Dorsolateral prefrontal cortex (tissue), 120 donors: ENCODE measurements at regions of chr19 and their contacts with region 1.

Region 1: GRCh38 chr19:57279418-57280066 is 743 bp upstream of the ZNF460 start:
- DNase-seq: peak; percentile 68 to 94 (median 90)
- H3K4me3 ChIP-seq: peak overlapping the region; percentile 62 to 100 (median 96)
- H3K27ac ChIP-seq: peak overlapping the region; percentile 87 to 100 (median 98)
- H3K27me3 ChIP-seq: no peaks in the 10 kb centered on the region
- CTCF ChIP-seq: peak in 49 of 56 donors; percentile 17 to 67 (median 46)

Region 2: DNA sequence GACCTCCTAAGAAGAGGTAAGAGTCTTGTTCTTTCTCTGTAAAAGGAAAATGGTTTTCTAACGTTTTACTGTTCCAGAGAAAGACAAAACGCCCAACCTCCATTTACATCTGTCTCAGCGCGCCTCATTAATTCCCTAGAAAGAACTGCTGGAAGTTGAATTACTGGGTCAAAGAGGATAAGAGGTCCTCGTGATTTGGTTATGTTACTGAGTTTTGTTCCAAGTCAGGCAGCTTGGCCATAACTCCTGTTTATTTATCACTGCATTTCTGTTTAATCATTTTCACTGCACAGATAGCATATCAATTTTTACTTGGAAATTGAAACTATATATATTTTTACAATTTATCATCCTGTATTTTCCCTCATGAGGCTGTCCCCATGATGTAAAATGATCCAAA is 326.1 kb before region 1 on chr19:
- intact Hi-C with region 1: no loop called
- DNase-seq: no peak
- H3K4me3 ChIP-seq: no peak overlapping the region
- H3K27ac ChIP-seq: no peak overlapping the region
- H3K27me3 ChIP-seq: peaks cover 0 to 13% (median 0%) of the 10 kb centered on the region in 45 donors
- CTCF ChIP-seq: no peak

Region 3: GRCh38 chr19:57191141-57192076 is 88.1 kb before region 1 on chr19 and contains the start of gene ZNF264:
- intact Hi-C with region 1: loop called in 1 of 2 experiments (anchors 10 kb)
- DNase-seq: peak; percentile 85 to 94 (median 92)
- H3K4me3 ChIP-seq: peak within 1 kb of the TSS; percentile 61 to 100 (median 97)
- H3K27ac ChIP-seq: peak within 1 kb of the TSS in 58 of 59 donors; percentile 69 to 96 (median 88)
- H3K27me3 ChIP-seq: peaks cover 0 to 10% (median 0%) of the 10 kb centered on the region in 45 donors
- CTCF ChIP-seq: peak in 33 of 56 donors; percentile 3 to 45 (median 24)
- total RNA-seq, gene ZNF264: 28.2 to 58.6 (median 43.9) TPM

Region 4: DNA sequence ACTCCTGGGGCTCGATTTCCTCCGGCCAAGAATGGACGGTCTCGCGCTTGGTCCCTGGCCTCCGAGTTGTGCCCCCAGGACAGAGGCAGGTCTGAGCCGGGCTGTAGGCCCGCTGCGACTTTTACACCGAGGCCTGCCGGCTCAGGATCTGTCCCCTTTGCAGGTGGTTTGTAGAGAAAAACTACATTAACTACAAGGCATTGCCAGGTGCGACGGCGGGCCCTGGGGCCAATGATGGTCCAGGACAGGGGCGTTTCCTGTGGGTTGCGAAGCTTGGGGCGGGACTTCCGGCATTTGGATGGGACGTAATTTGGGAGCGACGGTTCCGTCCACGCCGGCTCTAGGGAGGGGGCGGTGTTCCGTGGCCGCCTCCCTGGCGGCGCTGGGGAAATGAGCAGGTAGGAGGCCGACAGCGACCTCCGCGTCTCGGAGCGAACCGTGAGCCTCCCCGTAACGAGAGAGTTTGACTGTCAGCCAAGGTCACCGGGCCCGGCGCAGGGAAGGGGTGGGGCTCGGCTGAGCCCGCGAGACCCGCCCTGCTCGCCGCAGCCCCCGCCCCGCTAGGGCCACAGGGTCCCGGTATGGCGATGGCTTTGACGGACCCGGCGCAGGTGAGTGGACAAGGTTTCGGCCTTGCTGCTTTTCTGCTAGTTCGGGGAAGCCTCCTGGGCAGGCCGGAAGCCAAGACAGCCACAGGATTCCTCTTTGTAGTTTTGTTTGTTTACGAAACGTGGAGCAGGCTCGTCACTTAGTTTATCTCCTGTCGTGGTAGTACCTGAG is 39.0 kb before region 1 on chr19 and contains the start of gene ZNF805:
- intact Hi-C with region 1: loop called (anchors 1 to 2 kb)
- DNase-seq: peak; percentile 89 to 97 (median 96)
- H3K4me3 ChIP-seq: peak within 1 kb of the TSS; percentile 69 to 100 (median 95)
- H3K27ac ChIP-seq: peak within 1 kb of the TSS in 57 of 59 donors; percentile 18 to 96 (median 86)
- H3K27me3 ChIP-seq: no peaks in the 10 kb centered on the region
- CTCF ChIP-seq: peak in 45 of 56 donors; percentile 9 to 56 (median 35)
- total RNA-seq, gene ZNF805: 13.8 to 22.6 (median 17.4) TPM

Region 5: GRCh38 chr19:57320180-57321084 is 40.9 kb after region 1 on chr19 and contains the start of gene ZNF543:
- intact Hi-C with region 1: loop called in 1 of 2 experiments (anchors 5 kb)
- DNase-seq: peak; percentile 94 to 98 (median 97)
- H3K4me3 ChIP-seq: peak within 1 kb of the TSS; percentile 66 to 98 (median 93)
- H3K27ac ChIP-seq: peak within 1 kb of the TSS in 57 of 59 donors; percentile 38 to 93 (median 81)
- H3K27me3 ChIP-seq: no peaks in the 10 kb centered on the region
- CTCF ChIP-seq: peak in 13 of 56 donors; percentile 9 to 29 (median 18)
- total RNA-seq, gene ZNF543: 10.1 to 23.0 (median 14.9) TPM

Region 6: GRCh38 chr19:57350877-57351805 is 71.6 kb after region 1 on chr19 and contains the start of gene ZNF304:
- intact Hi-C with region 1: loop called in 1 of 2 experiments (anchors 10 kb)
- DNase-seq: peak; percentile 89 to 98 (median 97)
- H3K4me3 ChIP-seq: peak within 1 kb of the TSS; percentile 73 to 100 (median 96)
- H3K27ac ChIP-seq: peak within 1 kb of the TSS in 52 of 59 donors; percentile 15 to 92 (median 70)
- H3K27me3 ChIP-seq: no peaks in the 10 kb centered on the region
- CTCF ChIP-seq: peak in 22 of 56 donors; percentile 6 to 40 (median 24)
- total RNA-seq, gene ZNF304: 8.4 to 20.2 (median 13.3) TPM

Region 7: DNA sequence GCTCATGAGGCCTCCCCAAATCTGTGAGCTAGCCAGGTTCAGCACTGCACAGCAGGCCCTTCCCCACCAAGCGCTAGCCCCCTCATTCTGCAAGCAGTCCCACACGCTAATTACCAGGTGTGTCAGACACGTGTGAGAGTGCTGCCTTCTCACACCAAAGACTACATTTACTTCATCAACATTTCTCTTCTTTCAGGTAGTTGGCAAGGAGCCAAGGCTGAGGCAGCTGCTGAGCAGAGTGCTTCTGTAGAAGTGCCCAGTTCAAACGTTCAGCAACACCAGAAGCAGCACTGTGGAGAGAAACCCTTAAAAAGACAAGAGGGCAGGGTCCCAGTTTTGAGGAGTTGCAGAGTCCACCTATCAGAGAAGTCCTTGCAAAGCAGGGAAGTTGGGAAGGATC is 226.6 kb after region 1 on chr19:
- intact Hi-C with region 1: no loop called
- DNase-seq: no peak
- H3K4me3 ChIP-seq: no peak overlapping the region
- H3K27ac ChIP-seq: no peak overlapping the region
- H3K27me3 ChIP-seq: no peaks in the 10 kb centered on the region
- CTCF ChIP-seq: no peak

Region 8: DNA sequence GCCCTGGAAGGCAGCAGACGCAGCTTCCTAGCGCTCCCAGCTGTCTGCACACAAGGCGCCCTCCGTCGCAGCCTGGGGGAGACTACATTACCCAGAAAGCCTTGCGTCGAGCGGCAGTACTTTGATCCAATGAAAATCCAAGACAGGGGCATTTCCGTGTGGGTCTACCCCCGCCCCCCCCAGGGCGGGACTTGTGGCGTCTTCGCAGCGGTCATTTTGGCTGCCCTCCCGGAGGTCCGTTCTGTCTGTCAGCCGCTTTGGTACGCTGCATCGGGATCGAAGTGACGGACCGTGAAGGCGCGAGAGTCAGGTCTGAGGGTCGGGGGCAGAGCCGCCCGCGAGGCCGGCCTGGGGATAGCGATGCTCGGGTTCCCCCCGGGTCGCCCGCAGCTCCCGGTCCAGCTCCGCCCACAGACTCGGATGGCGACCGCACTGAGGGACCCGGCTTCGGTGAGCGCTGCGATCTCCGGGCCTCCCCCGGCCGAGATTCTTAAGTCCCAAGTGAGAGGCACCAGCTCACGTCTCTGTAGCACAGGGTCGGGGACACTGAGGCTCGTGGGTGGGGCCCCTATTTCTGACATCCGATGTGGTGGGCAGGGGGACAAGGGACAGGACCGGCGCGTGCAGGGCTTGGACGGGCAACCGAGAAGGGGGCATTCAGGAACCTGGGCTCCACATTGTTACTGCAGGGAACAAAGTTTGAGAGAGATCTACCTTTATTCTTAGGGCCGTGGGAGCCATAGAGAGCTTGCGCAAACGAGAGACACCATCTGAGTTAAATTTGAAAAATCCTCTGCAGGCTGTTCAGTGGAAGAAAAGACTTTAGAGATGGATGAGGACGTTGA is 353.7 kb after region 1 on chr19 and contains the start of gene ZNF211:
- intact Hi-C with region 1: no loop called
- DNase-seq: peak; percentile 90 to 96 (median 94)
- H3K4me3 ChIP-seq: peak within 1 kb of the TSS; percentile 68 to 99 (median 90)
- H3K27ac ChIP-seq: peak within 1 kb of the TSS in 57 of 59 donors; percentile 33 to 92 (median 80)
- H3K27me3 ChIP-seq: no peaks in the 10 kb centered on the region
- CTCF ChIP-seq: peak in 46 of 56 donors; percentile 7 to 63 (median 40)
- total RNA-seq, gene ZNF211: 14.6 to 37.0 (median 23.5) TPM